Gastrocnemius medialis (tissue), 4 donors: ENCODE measurements at regions of chr1 and their contacts with region 1.

Region 1: GRCh38 chr1:24018611-24019580 is 38.8 kb upstream of the SRSF10 start:
- DNase-seq: peak; percentile 82 to 94
- ATAC-seq: peak; percentile 81 to 90
- H3K4me3 ChIP-seq: peak overlapping the region in 3 of 4 donors; percentile 14 to 40 (median 21)
- H3K27ac ChIP-seq: peak overlapping the region; percentile 84 to 89 (median 89)
- H3K4me1 ChIP-seq: peaks cover 56 to 58% of the 10 kb centered on the region in 2 donors
- H3K27me3 ChIP-seq: no peaks in the 10 kb centered on the region
- CTCF ChIP-seq: no peak
- POLR2A ChIP-seq: peak in 1 of 2 donors; percentile 27

Region 2: DNA sequence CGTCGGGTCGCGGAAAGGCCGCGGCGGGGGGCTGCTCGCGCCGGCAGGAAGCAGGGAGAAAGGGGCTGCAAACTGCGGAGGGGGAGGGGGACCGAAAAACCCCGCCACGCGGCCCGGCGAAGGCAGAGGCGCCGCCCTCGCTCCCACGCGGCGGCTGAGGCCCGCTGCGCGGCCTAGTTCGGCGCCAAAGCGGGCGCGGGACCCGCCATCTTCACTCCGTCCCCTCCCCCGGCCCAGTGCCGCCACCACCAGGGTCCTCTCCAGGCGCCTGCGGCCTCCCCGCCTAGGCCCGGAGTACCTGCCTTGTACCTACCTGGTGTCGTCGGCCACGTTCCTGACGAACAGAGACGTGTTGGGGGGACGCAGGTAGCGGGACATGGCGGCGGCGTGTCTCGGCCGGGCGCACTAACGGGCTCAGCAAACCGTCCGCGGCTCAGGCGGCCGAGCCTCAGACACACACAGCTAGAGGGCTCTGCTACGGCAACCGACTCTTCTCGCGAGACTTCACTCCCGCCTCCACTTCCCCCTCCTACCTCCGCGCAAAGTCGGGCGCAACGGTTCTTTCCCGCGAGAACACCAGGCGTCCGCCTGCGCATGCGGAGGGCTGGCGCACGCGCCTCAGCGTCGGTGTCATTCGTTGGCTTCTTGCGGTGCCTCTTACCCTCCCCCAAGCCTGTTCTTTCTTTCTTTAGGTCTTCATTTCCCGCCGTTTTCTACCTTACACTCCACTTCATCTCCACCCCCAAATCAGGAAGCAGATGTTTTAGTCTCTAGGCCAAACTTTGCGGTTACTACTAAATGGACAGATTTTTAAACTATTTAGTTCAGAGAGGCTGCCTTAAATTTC is 38.8 kb before region 1 on chr1 and contains the start of gene SRSF10:
- in situ Hi-C with region 1: no loop called
- intact Hi-C with region 1: loop called (anchors 2 kb)
- DNase-seq: peak; percentile 98 to 99
- ATAC-seq: peak; percentile 99
- H3K4me3 ChIP-seq: peak within 1 kb of the TSS; percentile 72 to 89 (median 88)
- H3K27ac ChIP-seq: peak within 1 kb of the TSS; percentile 88 to 98 (median 96)
- H3K4me1 ChIP-seq: peaks cover 51 to 52% of the 10 kb centered on the region in 2 donors
- H3K27me3 ChIP-seq: no peaks in the 10 kb centered on the region
- CTCF ChIP-seq: peak in 3 of 5 experiments; percentile 39 to 64 (median 51)
- POLR2A ChIP-seq: peak; percentile 99
- total RNA-seq, gene SRSF10: 20.4 to 49.9 (median 26.5) TPM